Activated T-helper 1 cell treated with anti-CD3 and anti-CD28 coated beads, Interleukin-12 subunit alpha, Interleukin-12 subunit beta, Interleukin-2, Interleukin-4 antibody, amounts not matched to agents 30 ng/mL and 10 ng/mL and 1 ng/mL, durations not matched to agents 14 hours and 24 hours and 36 hours (primary cell): ENCODE measurements at regions of chr7 and their contacts with region 1.

Region 1: DNA sequence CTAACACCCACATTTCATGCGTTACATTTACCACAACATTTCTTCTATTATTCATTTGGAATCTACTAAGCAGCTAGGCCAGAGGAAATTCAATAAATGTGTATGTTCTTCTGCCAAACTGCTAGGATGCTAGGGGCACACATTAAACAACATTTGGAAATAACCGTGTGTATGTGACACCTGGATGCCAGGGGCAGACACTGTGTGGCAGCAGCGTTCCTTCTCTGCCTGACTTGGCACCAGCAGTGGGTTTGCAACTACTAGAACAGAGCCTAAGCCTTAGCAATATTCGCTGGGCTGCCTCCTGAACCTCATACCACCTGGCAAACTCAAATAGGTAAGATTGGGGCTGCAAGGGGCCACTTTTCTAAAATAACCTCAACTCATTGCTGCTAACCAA is 182.1 kb downstream of the CHCHD3 start:
- DNase-seq: no peak
- H3K4me3 Mint-ChIP-seq: no peak overlapping the region
- H3K27ac Mint-ChIP-seq: no peak overlapping the region
- H3K4me1 Mint-ChIP-seq: no peaks in the 10 kb centered on the region
- H3K27me3 Mint-ChIP-seq: no peaks in the 10 kb centered on the region

Region 2: DNA sequence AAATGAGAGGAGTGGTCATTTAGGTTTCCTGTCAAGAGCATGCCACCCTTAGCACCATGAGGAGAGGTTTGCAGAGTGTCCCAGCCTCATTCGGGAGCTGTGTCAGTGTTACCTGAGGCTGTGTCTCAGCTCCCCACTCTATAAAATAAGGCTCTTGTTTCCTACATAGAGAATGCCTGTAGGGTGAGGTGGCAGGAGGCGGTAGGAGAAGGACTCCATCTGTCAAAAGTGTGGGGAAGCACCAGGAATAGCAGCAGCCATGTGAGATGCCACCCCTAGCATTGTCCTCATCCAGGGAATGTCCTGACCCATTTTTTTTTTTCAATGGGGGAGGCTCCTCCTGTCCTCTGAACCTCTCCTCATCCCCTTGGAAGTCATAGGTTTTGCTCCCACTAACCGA is 774.7 kb before region 1 on chr7:
- intact Hi-C with region 1: no loop called
- DNase-seq: no peak
- H3K4me3 Mint-ChIP-seq: no peak overlapping the region
- H3K27ac Mint-ChIP-seq: no peak overlapping the region
- H3K4me1 Mint-ChIP-seq: no peaks in the 10 kb centered on the region
- H3K27me3 Mint-ChIP-seq: peaks cover 4% of the 10 kb centered on the region

Region 3: GRCh38 chr7:132846086-132846485 is 53.7 kb before region 1 on chr7:
- intact Hi-C with region 1: loop called (anchors 1 kb)
- DNase-seq: no peak
- H3K4me3 Mint-ChIP-seq: no peak overlapping the region
- H3K27ac Mint-ChIP-seq: no peak overlapping the region
- H3K4me1 Mint-ChIP-seq: no peaks in the 10 kb centered on the region
- H3K27me3 Mint-ChIP-seq: no peaks in the 10 kb centered on the region